Transverse colon (tissue), 4 donors: ENCODE measurements at regions of chr21 and their contacts with region 1.

Region 1: GRCh38 chr21:45596704-45597318 is 46.7 kb upstream of the PCBP3 start:
- DNase-seq: peak; percentile 82
- H3K4me3 ChIP-seq: no peak overlapping the region
- H3K27ac ChIP-seq: no peak overlapping the region
- H3K4me1 ChIP-seq: peaks cover 0 to 5% (median 2%) of the 10 kb centered on the region in 4 donors
- H3K27me3 ChIP-seq: no peaks in the 10 kb centered on the region
- CTCF ChIP-seq: peak; percentile 84 to 91 (median 86)
- EP300 ChIP-seq: no peak
- POLR2A ChIP-seq: no peak

Region 2: GRCh38 chr21:44737706-44738354 is 859.0 kb before region 1 on chr21:
- in situ Hi-C with region 1: no loop called
- intact Hi-C with region 1: no loop called
- DNase-seq: no peak
- H3K4me3 ChIP-seq: no peak overlapping the region
- H3K27ac ChIP-seq: no peak overlapping the region
- H3K4me1 ChIP-seq: no peaks in the 10 kb centered on the region
- H3K27me3 ChIP-seq: no peaks in the 10 kb centered on the region
- CTCF ChIP-seq: no peak
- EP300 ChIP-seq: no peak
- POLR2A ChIP-seq: no peak

Region 3: GRCh38 chr21:45478115-45478801 is 118.6 kb before region 1 on chr21:
- in situ Hi-C with region 1: loop called in 1 of 4 experiments (anchors 10 kb)
- intact Hi-C with region 1: no loop called
- DNase-seq: peak; percentile 74
- H3K4me3 ChIP-seq: peak overlapping the region in 2 of 4 donors; percentile 10 to 35
- H3K27ac ChIP-seq: peak overlapping the region; percentile 3 to 56 (median 46)
- H3K4me1 ChIP-seq: peaks cover 7 to 15% (median 12%) of the 10 kb centered on the region in 4 donors
- H3K27me3 ChIP-seq: no peaks in the 10 kb centered on the region
- CTCF ChIP-seq: peak; percentile 87 to 91 (median 89)
- EP300 ChIP-seq: no peak
- POLR2A ChIP-seq: no peak

Region 4: GRCh38 chr21:45554477-45555175 is 42.2 kb before region 1 on chr21:
- in situ Hi-C with region 1: loop called in 1 of 4 experiments (anchors 5 kb)
- intact Hi-C with region 1: no loop called
- DNase-seq: peak; percentile 88
- H3K4me3 ChIP-seq: peak overlapping the region; percentile 16 to 78 (median 47)
- H3K27ac ChIP-seq: peak overlapping the region; percentile 71 to 79 (median 76)
- H3K4me1 ChIP-seq: peaks cover 0 to 18% (median 11%) of the 10 kb centered on the region in 4 donors
- H3K27me3 ChIP-seq: no peaks in the 10 kb centered on the region
- CTCF ChIP-seq: peak; percentile 76 to 89 (median 85)
- EP300 ChIP-seq: no peak
- POLR2A ChIP-seq: no peak

Region 5: GRCh38 chr21:45899322-45900033 is 302.7 kb after region 1 on chr21:
- in situ Hi-C with region 1: no loop called
- intact Hi-C with region 1: no loop called
- DNase-seq: no peak
- H3K4me3 ChIP-seq: no peak overlapping the region
- H3K27ac ChIP-seq: no peak overlapping the region
- H3K4me1 ChIP-seq: no peaks in the 10 kb centered on the region
- H3K27me3 ChIP-seq: no peaks in the 10 kb centered on the region
- CTCF ChIP-seq: no peak
- EP300 ChIP-seq: no peak
- POLR2A ChIP-seq: no peak